ENCODE measurements at regions of chr12 and their contacts with region 1.

Region 1: DNA sequence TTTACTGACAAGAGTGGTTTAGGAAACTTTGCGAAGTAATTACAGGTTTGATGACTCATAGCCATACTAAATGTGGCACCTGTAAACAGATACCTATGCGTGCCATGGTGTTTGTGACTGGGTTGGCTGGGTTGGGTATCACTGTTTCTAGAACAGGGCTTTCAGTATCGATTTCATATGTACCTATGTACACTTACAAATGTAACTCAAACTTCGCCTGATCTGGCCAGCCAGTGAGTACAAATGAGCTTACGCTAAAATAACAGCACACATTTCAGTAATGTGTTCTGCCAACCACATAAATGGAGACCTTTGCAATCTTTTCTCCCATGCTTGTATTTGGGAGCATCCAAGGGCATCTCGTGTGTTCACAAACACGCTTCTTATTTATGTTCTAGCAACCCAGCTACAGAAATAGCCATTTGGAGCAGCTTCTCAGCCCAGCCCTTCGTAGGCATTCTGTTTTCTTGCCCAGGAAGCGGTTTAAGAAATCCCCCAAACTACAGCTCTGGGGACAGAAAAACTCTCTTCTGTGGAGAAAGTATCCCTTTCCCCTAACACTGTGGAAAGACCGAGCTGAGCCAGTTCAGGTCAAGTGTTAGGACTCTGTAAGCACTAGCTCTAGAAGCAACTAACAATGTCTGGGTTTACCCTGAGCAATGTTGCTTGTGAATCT is 42.3 kb upstream of the MDM1 start:
- DNase-seq: peak; percentile 79
- ATAC-seq: peak; percentile 89
- H3K4me3 Mint-ChIP-seq: no peak overlapping the region
- H3K27ac Mint-ChIP-seq: peak overlapping the region; percentile 89
- H3K4me1 Mint-ChIP-seq: peaks cover 48% of the 10 kb centered on the region
- H3K27me3 Mint-ChIP-seq: no peaks in the 10 kb centered on the region

Region 2: GRCh38 chr12:68342966-68343365 is 31.5 kb before region 1 on chr12:
- CTCF ChIA-PET with region 1: no interaction called
- POLR2A ChIA-PET with region 1: no interaction called
- intact Hi-C with region 1: no loop called
- DNase-seq: no peak
- ATAC-seq: no peak
- H3K4me3 Mint-ChIP-seq: no peak overlapping the region
- H3K27ac Mint-ChIP-seq: no peak overlapping the region
- H3K4me1 Mint-ChIP-seq: peaks cover 6% of the 10 kb centered on the region
- H3K27me3 Mint-ChIP-seq: peaks cover 5% of the 10 kb centered on the region

Region 3: DNA sequence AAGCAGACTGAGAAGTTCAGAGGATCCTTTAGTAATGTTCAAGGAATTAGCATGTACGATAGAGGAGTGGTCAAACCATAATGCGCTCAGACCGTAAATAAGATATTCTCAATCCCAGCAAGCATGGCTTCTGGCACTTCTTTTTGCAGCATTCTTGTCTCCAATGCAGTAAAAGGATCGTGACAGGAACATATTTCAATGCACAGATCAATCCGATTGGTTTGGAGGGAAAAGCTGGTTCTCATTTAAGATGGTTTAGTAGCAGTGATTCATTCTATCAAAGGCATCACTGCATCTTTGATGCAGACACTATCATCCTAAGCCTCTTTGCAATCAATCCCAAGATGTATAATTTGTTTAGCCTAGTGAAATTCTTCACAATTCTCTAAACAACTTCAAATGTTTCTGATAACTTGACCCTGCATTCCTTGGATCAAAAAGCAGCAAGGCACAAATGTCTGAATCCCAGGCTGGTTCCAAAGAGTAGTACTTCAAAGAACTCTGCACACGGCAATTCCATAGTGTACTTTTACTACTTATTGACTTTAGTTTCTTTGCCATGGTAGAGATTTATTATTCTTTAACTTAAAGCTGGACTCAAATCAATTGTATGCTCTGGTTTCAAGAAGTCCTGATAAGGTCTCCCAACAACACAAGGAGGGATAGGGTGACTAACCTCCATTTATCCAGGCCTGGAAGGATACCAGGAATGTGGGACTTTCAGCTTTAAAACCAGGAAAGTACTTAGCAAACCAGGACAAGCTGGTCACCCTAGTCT is 54.5 kb after region 1 on chr12:
- CTCF ChIA-PET with region 1: no interaction called
- POLR2A ChIA-PET with region 1: no interaction called
- intact Hi-C with region 1: no loop called
- DNase-seq: no peak
- ATAC-seq: no peak
- H3K4me3 Mint-ChIP-seq: no peak overlapping the region
- H3K27ac Mint-ChIP-seq: no peak overlapping the region
- H3K4me1 Mint-ChIP-seq: no peaks in the 10 kb centered on the region
- H3K27me3 Mint-ChIP-seq: no peaks in the 10 kb centered on the region

Region 4: GRCh38 chr12:68482660-68483059 is 108.2 kb after region 1 on chr12:
- CTCF ChIA-PET with region 1: no interaction called
- POLR2A ChIA-PET with region 1: interaction called, 8 read pairs
- intact Hi-C with region 1: loop called in 1 of 2 experiments (anchors 2 kb)
- DNase-seq: peak; percentile 26
- ATAC-seq: peak; percentile 8
- H3K4me3 Mint-ChIP-seq: no peak overlapping the region
- H3K27ac Mint-ChIP-seq: peak overlapping the region; percentile 66
- H3K4me1 Mint-ChIP-seq: peaks cover 40% of the 10 kb centered on the region
- H3K27me3 Mint-ChIP-seq: no peaks in the 10 kb centered on the region

Region 5: GRCh38 chr12:69639400-69640016 is 1265.1 kb after region 1 on chr12:
- CTCF ChIA-PET with region 1: no interaction called
- POLR2A ChIA-PET with region 1: no interaction called
- intact Hi-C with region 1: no loop called
- DNase-seq: peak; percentile 79
- ATAC-seq: peak; percentile 88
- H3K4me3 Mint-ChIP-seq: no peak overlapping the region
- H3K27ac Mint-ChIP-seq: no peak overlapping the region
- H3K4me1 Mint-ChIP-seq: no peaks in the 10 kb centered on the region
- H3K27me3 Mint-ChIP-seq: no peaks in the 10 kb centered on the region